ENCODE measurements at regions of chr14 and their contacts with region 1.

Region 1: DNA sequence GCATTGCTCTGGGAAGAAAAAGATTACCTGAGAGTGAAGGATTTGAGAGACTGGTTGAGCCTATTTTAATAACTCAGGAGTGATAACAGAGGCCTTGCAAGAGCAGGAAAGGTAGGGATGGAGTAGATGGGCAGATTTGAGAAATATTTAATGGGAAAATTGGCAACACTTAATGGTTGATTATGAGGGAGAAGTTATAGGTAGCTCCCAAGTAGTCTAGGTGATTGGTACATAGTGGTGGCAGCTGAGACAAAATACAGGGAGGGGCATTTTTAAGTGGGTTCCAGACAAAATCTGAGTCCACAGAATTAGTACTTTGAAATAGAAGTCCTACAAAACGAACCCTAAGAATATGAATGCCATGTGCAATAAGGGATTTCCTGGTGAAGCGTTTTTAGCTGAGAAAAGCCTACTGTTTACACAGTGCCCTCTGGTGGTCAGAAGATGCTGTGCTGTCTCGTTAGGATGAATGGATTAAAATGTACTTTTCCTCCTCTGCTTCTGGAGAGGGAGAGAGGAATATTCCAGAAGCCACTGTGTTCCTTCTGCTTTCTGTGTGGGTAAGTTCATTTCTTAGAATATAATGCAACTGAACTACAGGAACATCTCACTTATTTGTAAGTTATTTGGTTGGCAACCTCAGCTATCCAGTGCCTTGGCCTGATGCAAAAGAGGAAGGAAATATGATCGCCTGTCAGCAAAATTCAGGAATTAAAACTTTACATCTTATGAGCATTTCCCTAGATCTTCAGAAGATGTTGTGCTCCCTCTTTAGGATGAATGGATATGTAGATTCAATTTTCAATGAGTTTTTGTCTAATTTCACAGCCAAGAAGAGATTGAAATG is 6.5 kb downstream of the ZBTB1 start:
- DNase-seq: peak; percentile 74
- H3K4me3 Mint-ChIP-seq: peak overlapping the region; percentile 50
- H3K27ac Mint-ChIP-seq: peak overlapping the region; percentile 78
- H3K4me1 Mint-ChIP-seq: peaks cover 70% of the 10 kb centered on the region
- H3K27me3 Mint-ChIP-seq: no peaks in the 10 kb centered on the region

Region 2: DNA sequence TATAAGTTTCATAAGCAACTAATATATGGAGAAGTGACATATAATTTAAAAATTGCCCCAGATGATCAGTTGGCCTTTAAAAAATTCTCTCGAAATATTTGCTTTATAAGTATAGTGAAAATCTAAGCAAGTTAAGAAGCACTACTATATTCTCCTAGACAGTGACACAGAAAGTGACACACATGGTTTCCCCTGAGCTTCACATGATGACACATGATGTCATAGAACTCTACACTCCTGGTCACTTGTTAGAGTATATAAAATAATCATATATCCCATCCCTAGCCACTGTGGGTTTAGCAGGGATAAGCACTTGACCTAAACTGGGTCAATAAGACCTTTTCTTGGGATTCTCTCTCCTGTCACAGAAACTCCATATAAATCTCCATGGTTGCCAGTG is 165.5 kb before region 1 on chr14:
- CTCF ChIA-PET with region 1: interaction called, 30 read pairs
- POLR2A ChIA-PET with region 1: no interaction called
- intact Hi-C with region 1: no loop called
- DNase-seq: no peak
- H3K4me3 Mint-ChIP-seq: no peak overlapping the region
- H3K27ac Mint-ChIP-seq: no peak overlapping the region
- H3K4me1 Mint-ChIP-seq: no peaks in the 10 kb centered on the region
- H3K27me3 Mint-ChIP-seq: no peaks in the 10 kb centered on the region

Region 3: DNA sequence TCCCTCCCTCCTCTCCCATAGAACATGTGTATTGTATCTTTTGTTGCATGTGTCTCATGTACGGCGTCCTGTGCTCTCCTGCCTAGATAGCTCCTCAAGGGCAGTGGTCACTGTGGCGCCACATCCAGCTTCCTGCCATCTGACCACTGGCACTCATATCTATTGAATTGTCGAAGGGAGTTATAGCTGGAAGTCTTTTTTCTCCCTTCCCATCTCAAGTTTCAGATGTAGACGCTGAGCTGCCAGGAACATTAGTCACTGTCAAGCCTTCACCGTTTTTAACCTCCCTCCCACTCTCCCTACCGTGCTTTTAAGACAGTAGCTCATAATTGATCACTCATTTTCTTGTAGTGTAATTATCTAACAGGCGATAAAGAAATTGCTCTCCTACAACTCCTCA is 89.9 kb before region 1 on chr14:
- CTCF ChIA-PET with region 1: interaction called, 14 read pairs
- POLR2A ChIA-PET with region 1: interaction called, 3 read pairs
- intact Hi-C with region 1: no loop called
- DNase-seq: no peak
- H3K4me3 Mint-ChIP-seq: no peak overlapping the region
- H3K27ac Mint-ChIP-seq: no peak overlapping the region
- H3K4me1 Mint-ChIP-seq: peaks cover 25% of the 10 kb centered on the region
- H3K27me3 Mint-ChIP-seq: no peaks in the 10 kb centered on the region

Region 4: DNA sequence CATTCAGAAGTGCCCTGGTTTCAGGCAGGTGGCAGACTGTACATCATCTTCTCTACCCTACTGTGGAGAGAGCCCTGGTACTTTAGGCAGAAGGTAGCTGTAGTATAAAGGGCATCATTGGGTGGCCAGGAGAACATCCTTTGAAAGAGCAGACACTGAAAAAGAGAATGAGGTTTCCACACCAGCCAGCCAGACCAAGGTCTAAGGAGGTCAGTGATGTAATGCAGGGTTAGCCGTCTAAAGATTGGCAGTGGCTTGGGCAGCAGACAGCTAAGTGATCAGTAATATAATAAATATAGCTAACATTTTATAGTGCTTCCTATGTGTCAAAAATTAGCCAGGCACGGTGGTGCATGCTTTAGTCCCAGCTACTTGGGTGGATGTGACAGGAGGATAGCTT is 19.4 kb before region 1 on chr14:
- CTCF ChIA-PET with region 1: interaction called, 29 read pairs
- POLR2A ChIA-PET with region 1: no interaction called
- intact Hi-C with region 1: no loop called
- DNase-seq: no peak
- H3K4me3 Mint-ChIP-seq: no peak overlapping the region
- H3K27ac Mint-ChIP-seq: no peak overlapping the region
- H3K4me1 Mint-ChIP-seq: peaks cover 46% of the 10 kb centered on the region
- H3K27me3 Mint-ChIP-seq: no peaks in the 10 kb centered on the region

Region 5: GRCh38 chr14:64496764-64497163 is 14.3 kb before region 1 on chr14:
- CTCF ChIA-PET with region 1: interaction called, 29 read pairs
- POLR2A ChIA-PET with region 1: interaction called, 5 read pairs
- intact Hi-C with region 1: no loop called
- DNase-seq: no peak
- H3K4me3 Mint-ChIP-seq: no peak overlapping the region
- H3K27ac Mint-ChIP-seq: peak overlapping the region; percentile 21
- H3K4me1 Mint-ChIP-seq: peaks cover 70% of the 10 kb centered on the region
- H3K27me3 Mint-ChIP-seq: no peaks in the 10 kb centered on the region

Region 6: DNA sequence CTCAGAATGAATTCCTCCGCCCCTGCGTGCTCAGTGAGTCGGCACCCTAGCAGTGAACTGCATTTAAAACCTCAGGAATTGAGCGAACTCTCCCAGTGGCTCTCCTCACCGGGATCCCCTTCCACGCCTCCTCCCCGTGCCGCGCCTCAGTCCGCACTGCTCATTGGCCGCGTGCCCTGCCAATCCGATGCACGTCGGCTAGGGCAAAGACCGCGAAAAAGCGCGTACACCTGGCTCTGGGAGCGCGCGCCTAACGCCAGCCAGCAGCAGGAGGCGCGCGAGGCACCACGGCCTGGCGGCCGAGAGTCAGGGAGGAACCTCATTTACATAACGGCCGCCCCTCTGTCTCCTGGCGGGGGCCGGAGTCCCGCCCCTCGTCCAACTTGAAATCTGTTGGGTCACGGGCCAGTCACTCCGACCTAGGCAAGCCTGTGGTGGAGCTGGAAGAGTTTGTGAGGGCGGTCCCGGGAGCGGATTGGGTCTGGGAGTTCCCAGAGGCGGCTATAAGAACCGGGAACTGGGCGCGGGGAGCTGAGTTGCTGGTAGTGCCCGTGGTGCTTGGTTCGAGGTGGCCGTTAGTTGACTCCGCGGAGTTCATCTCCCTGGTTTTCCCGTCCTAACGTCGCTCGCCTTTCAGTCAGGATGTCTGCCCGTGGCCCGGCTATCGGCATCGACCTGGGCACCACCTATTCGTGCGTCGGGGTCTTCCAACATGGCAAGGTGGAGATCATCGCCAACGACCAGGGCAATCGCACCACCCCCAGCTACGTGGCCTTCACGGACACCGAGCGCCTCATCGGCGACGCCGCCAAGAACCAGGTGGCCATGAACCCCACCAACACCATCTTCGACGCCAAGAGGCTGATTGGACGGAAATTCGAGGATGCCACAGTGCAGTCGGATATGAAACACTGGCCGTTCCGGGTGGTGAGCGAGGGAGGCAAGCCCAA is 29.4 kb after region 1 on chr14 and contains the start of gene HSPA2:
- CTCF ChIA-PET with region 1: interaction called, 16 read pairs
- POLR2A ChIA-PET with region 1: interaction called, 3 read pairs
- intact Hi-C with region 1: no loop called
- DNase-seq: peak; percentile 98
- H3K4me3 Mint-ChIP-seq: peak within 1 kb of the TSS; percentile 89
- H3K27ac Mint-ChIP-seq: peak within 1 kb of the TSS; percentile 84
- H3K4me1 Mint-ChIP-seq: peaks cover 35% of the 10 kb centered on the region
- H3K27me3 Mint-ChIP-seq: peaks cover 24% of the 10 kb centered on the region
- total RNA-seq, gene HSPA2: 6.6 to 6.7 TPM

Measured in activated CD4-positive, alpha-beta memory T cell treated with anti-CD3 and anti-CD28 coated beads for 36 hours (primary cell).